ENCODE measurements at regions of chr2 and their contacts with region 1.

Region 1: GRCh38 chr2:75403991-75404428 is 156.7 kb downstream of the EVA1A start:
- DNase-seq: peak; percentile 36
- ATAC-seq: peak; percentile 93
- H3K4me3 ChIP-seq: no peak overlapping the region
- H3K27ac ChIP-seq: no peak overlapping the region
- H3K4me1 ChIP-seq: no peaks in the 10 kb centered on the region; the same call in 1 of the 2 replicates
- H3K27me3 ChIP-seq: no peaks in the 10 kb centered on the region
- CTCF ChIP-seq: peak; percentile 73 to 85 (median 80)
- EP300 ChIP-seq: no peak
- POLR2A ChIP-seq: no peak
- RAD21 ChIP-seq: peak; percentile 90

Region 2: GRCh38 chr2:74919827-74920226 is 484.2 kb before region 1 on chr2:
- CTCF ChIA-PET with region 1: no interaction called
- POLR2A ChIA-PET with region 1: no interaction called
- RAD21 ChIA-PET with region 1: interaction called, 4 read pairs
- SMC1A ChIA-PET with region 1: interaction called, 3 read pairs
- in situ Hi-C with region 1: no loop called
- intact Hi-C with region 1: loop called (anchors 2 kb)
- DNase-seq: no peak
- ATAC-seq: peak; percentile 77
- H3K4me3 ChIP-seq: no peak overlapping the region
- H3K27ac ChIP-seq: no peak overlapping the region
- H3K4me1 ChIP-seq: peaks cover 6% of the 10 kb centered on the region; the same call in 1 of the 2 replicates
- H3K27me3 ChIP-seq: no peaks in the 10 kb centered on the region
- CTCF ChIP-seq: peak; percentile 69 to 85 (median 84)
- EP300 ChIP-seq: no peak
- POLR2A ChIP-seq: no peak
- RAD21 ChIP-seq: peak; percentile 95

Region 3: GRCh38 chr2:75098856-75099255 is 305.2 kb before region 1 on chr2:
- CTCF ChIA-PET with region 1: interaction called, 3 read pairs
- POLR2A ChIA-PET with region 1: no interaction called
- RAD21 ChIA-PET with region 1: interaction called, 3 read pairs
- SMC1A ChIA-PET with region 1: interaction called, 5 read pairs
- in situ Hi-C with region 1: no loop called
- intact Hi-C with region 1: loop called (anchors 1 kb)
- DNase-seq: no peak
- ATAC-seq: peak; percentile 87
- H3K4me3 ChIP-seq: no peak overlapping the region
- H3K27ac ChIP-seq: no peak overlapping the region
- H3K4me1 ChIP-seq: no peaks in the 10 kb centered on the region
- H3K27me3 ChIP-seq: no peaks in the 10 kb centered on the region
- CTCF ChIP-seq: peak; percentile 47 to 50 (median 48); a peak in 5 of 6 replicates
- EP300 ChIP-seq: no peak
- POLR2A ChIP-seq: no peak
- RAD21 ChIP-seq: peak; percentile 53

Region 4: GRCh38 chr2:75199428-75200011 is 204.5 kb before region 1 on chr2 and contains the start of gene TACR1:
- CTCF ChIA-PET with region 1: interaction called, 23 read pairs
- POLR2A ChIA-PET with region 1: interaction called, 4 read pairs
- RAD21 ChIA-PET with region 1: interaction called, 12 read pairs
- SMC1A ChIA-PET with region 1: interaction called, 22 read pairs
- in situ Hi-C with region 1: no loop called
- intact Hi-C with region 1: loop called (anchors 1 kb)
- DNase-seq: peak; percentile 35
- ATAC-seq: peak; percentile 91
- H3K4me3 ChIP-seq: peak within 1 kb of the TSS; percentile 57
- H3K27ac ChIP-seq: no peak within 1 kb of the TSS
- H3K4me1 ChIP-seq: peaks cover 4% of the 10 kb centered on the region; the same call in 1 of the 2 replicates
- H3K27me3 ChIP-seq: peaks cover 5 to 11% of the 10 kb centered on the region in 2 experiments
- CTCF ChIP-seq: peak; percentile 56 to 69 (median 64)
- EP300 ChIP-seq: 0 out of 4 replicates have a peak, but pooled peaks of 1 of the 2 experiments have one; percentile 22
- POLR2A ChIP-seq: no peak
- RAD21 ChIP-seq: peak; percentile 73
- polyA plus RNA-seq, gene TACR1: 0.04 to 0.05 TPM

Region 5: DNA sequence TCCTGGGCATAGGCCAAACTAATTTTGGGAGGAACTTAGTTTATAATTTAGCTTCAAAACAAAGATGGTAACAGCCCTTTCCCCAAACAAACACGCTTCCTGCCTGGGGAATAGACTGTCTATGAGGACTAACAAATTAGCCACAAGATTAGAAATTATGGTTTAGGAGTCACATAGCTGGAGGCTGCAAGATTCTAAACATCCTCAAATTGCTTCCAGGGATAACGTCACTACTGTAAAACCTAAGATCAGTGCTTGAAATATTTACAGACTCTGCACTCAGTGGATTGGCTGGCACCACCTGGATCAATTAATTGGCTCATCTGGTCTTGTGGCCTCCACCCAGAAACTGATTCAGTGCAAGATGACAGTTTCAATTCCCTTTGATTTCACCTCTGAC is 86.7 kb before region 1 on chr2:
- CTCF ChIA-PET with region 1: interaction called, 13 read pairs
- POLR2A ChIA-PET with region 1: no interaction called
- RAD21 ChIA-PET with region 1: interaction called, 4 read pairs
- SMC1A ChIA-PET with region 1: interaction called, 12 read pairs
- in situ Hi-C with region 1: no loop called
- intact Hi-C with region 1: loop called (anchors 1 kb)
- DNase-seq: no peak
- ATAC-seq: peak; percentile 48; the same call in 1 of the 3 replicates
- H3K4me3 ChIP-seq: no peak overlapping the region
- H3K27ac ChIP-seq: no peak overlapping the region
- H3K4me1 ChIP-seq: peaks cover under 1% of the 10 kb centered on the region
- H3K27me3 ChIP-seq: no peaks in the 10 kb centered on the region
- CTCF ChIP-seq: no peak
- EP300 ChIP-seq: no peak
- POLR2A ChIP-seq: no peak
- RAD21 ChIP-seq: no peak

Region 6: GRCh38 chr2:75416420-75417342 is 12.7 kb after region 1 on chr2:
- CTCF ChIA-PET with region 1: interaction called, 16 read pairs
- POLR2A ChIA-PET with region 1: interaction called, 9 read pairs
- RAD21 ChIA-PET with region 1: interaction called, 43 read pairs
- SMC1A ChIA-PET with region 1: interaction called, 32 read pairs
- in situ Hi-C with region 1: no loop called
- intact Hi-C with region 1: no loop called
- DNase-seq: peak; percentile 38
- ATAC-seq: peak; percentile 85
- H3K4me3 ChIP-seq: peak overlapping the region; percentile 69
- H3K27ac ChIP-seq: peak overlapping the region; percentile 77
- H3K4me1 ChIP-seq: no peaks in the 10 kb centered on the region
- H3K27me3 ChIP-seq: no peaks in the 10 kb centered on the region
- CTCF ChIP-seq: no peak
- EP300 ChIP-seq: no peak
- POLR2A ChIP-seq: 0 out of 2 replicates have a peak, but pooled peaks have one; percentile 36
- RAD21 ChIP-seq: no peak

Region 7: GRCh38 chr2:75432761-75433361 is 28.9 kb after region 1 on chr2:
- CTCF ChIA-PET with region 1: interaction called, 235 read pairs
- POLR2A ChIA-PET with region 1: interaction called, 8 read pairs
- RAD21 ChIA-PET with region 1: interaction called, 147 read pairs
- SMC1A ChIA-PET with region 1: interaction called, 211 read pairs
- in situ Hi-C with region 1: no loop called
- intact Hi-C with region 1: loop called (anchors 1 kb)
- DNase-seq: peak; percentile 96
- ATAC-seq: peak; percentile 86
- H3K4me3 ChIP-seq: peak overlapping the region; percentile 31
- H3K27ac ChIP-seq: peak overlapping the region; percentile 95
- H3K4me1 ChIP-seq: peaks cover 45% of the 10 kb centered on the region
- H3K27me3 ChIP-seq: no peaks in the 10 kb centered on the region
- CTCF ChIP-seq: no peak
- EP300 ChIP-seq: peak; percentile 50 to 69; a peak in 2 of 4 replicates
- POLR2A ChIP-seq: peak; percentile 66
- RAD21 ChIP-seq: peak; percentile 40

Region 8: GRCh38 chr2:75597641-75598508 is 193.9 kb after region 1 on chr2:
- CTCF ChIA-PET with region 1: no interaction called
- POLR2A ChIA-PET with region 1: no interaction called
- RAD21 ChIA-PET with region 1: no interaction called
- SMC1A ChIA-PET with region 1: no interaction called
- in situ Hi-C with region 1: no loop called
- intact Hi-C with region 1: no loop called
- DNase-seq: no peak
- ATAC-seq: no peak
- H3K4me3 ChIP-seq: no peak overlapping the region
- H3K27ac ChIP-seq: no peak overlapping the region
- H3K4me1 ChIP-seq: no peaks in the 10 kb centered on the region
- H3K27me3 ChIP-seq: no peaks in the 10 kb centered on the region; a peak in 1 of 4 replicates
- CTCF ChIP-seq: no peak
- EP300 ChIP-seq: no peak
- POLR2A ChIP-seq: no peak
- RAD21 ChIP-seq: no peak